Activated T-helper 2 cell treated with anti-CD3 and anti-CD28 coated beads, Interferon-gamma antibody, Interleukin-2, Interleukin-4, amounts not matched to agents 10 μg/mL and 5 μg/mL and 100 μg/mL, durations not matched to agents 14 hours and 24 hours and 36 hours (primary cell): ENCODE measurements at regions of chr3 and their contacts with region 1.

Region 1: DNA sequence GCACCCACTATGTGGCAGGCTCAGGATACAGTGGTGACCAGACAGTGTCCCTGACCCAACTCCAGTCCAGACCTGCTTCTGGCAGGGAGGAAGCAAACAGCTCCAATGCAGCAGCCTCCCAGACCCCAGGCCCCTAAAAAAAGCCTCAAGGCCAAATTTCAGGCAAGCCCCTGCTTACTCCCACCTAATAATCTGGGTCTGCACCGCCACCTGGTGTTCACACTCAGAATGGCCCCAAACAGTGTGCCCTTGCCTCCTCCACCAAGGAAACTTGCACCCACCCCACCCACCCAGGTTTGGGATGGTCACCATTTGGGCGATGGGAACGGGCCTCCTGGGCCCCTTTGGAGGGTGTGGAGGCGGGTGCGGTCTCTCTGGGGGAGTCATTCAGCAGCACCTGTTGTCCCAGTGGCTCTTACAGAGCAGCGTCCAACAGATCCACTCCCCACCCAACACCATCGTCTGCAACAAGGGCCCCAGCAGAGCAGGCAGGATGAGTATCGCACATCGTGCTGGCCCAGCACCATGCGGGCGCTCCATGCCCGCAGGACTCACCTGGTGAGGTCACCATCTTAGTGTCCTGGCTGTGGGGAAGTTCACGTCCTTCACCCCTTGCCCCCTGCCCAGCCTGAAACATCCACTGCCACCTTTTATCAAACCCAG is 17.3 kb downstream of the C3orf18 start:
- DNase-seq: peak; percentile 48
- H3K4me3 Mint-ChIP-seq: no peak overlapping the region
- H3K27ac Mint-ChIP-seq: no peak overlapping the region
- H3K4me1 Mint-ChIP-seq: no peaks in the 10 kb centered on the region
- H3K27me3 Mint-ChIP-seq: no peaks in the 10 kb centered on the region

Region 2: DNA sequence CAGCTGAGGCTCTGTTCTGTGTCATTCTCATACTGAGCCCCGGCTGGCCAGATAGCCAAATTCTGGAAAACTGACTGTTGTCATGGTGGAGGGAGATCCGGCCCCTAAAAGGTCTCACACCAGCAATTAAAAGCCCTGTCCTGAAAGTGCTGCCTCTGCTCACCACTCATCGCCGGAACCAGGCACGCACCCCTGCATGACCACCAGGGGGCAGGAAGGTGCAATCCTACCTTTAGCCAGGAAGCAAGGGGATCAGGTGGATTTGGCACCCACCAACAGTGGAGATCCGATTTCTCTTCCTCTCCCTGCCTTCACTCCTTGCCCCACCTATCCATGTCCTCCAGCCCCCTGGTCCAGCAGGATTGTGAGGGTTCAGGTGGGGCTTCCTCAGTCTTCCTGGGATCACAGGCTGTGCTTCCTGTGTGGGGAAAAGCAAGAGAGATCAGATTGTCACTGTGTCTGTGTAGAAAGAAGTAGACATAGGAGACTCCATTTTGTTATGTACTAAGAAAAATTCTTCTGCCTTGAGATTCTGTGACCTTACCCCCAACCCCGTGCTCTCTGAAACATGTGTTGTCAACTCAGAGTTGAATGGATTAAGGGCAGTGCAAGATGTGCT is 30.6 kb before region 1 on chr3:
- intact Hi-C with region 1: loop called (anchors 5 kb)
- DNase-seq: peak; percentile 67
- H3K4me3 Mint-ChIP-seq: no peak overlapping the region
- H3K27ac Mint-ChIP-seq: no peak overlapping the region
- H3K4me1 Mint-ChIP-seq: peaks cover 3% of the 10 kb centered on the region
- H3K27me3 Mint-ChIP-seq: peaks cover 16% of the 10 kb centered on the region

Region 3: GRCh38 chr3:50724831-50725230 is 174.6 kb after region 1 on chr3:
- intact Hi-C with region 1: no loop called
- DNase-seq: no peak
- H3K4me3 Mint-ChIP-seq: no peak overlapping the region
- H3K27ac Mint-ChIP-seq: no peak overlapping the region
- H3K4me1 Mint-ChIP-seq: no peaks in the 10 kb centered on the region
- H3K27me3 Mint-ChIP-seq: no peaks in the 10 kb centered on the region